Activated CD4-positive, alpha-beta T cell treated with anti-CD3 and anti-CD28 coated beads for 36 hours (primary cell): ENCODE measurements at regions of chr2 and their contacts with region 1.

Region 1: GRCh38 chr2:231557571-231558237 is 27.5 kb upstream of the NMUR1 start:
- DNase-seq: peak; percentile 73
- ATAC-seq: peak; percentile 98
- H3K4me3 Mint-ChIP-seq: no peak overlapping the region
- H3K27ac Mint-ChIP-seq: no peak overlapping the region
- H3K4me1 Mint-ChIP-seq: peaks cover 12% of the 10 kb centered on the region
- H3K27me3 Mint-ChIP-seq: peaks cover 3% of the 10 kb centered on the region

Region 2: DNA sequence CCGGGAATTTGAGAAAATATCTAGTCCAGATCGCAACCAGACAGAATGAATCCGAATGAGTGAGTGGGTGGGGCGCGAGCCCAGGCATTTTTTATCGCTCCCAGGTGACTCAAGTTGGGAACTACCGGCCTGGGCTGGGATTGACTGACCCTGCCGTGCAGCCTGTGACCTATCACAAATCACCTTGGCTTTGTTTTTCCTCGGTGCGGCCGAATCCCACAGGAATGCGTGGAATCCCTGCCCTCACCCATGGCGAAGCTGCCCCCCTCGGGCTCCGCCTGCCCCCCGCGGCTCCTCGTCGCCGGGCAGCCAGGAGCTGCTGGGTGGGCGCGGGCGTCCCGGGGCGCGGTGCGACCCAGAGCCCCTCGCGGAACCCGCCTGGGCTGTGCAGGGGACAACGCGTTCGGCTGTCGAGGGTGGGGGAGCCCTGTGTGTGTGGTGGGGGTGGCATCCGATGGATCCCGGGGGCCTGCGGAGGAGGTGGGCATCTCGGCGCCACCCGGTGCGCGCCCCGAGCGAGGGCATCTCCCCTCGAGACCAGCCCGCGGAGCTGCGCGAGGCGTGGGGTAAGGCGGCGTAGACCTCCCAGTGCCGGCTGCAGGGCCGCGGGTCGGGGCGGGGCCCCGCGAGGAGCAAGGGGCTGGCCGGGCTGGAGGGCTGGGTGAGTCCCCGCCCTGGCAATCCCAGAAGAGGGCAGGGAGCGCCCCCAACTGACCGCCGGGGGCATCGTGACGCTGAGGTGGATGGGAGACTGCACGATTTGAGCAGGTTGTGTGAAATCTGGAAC is 145.7 kb before region 1 on chr2:
- CTCF ChIA-PET with region 1: no interaction called
- POLR2A ChIA-PET with region 1: no interaction called
- intact Hi-C with region 1: no loop called
- DNase-seq: peak; percentile 86
- ATAC-seq: peak; percentile 99
- H3K4me3 Mint-ChIP-seq: peak overlapping the region; percentile 25
- H3K27ac Mint-ChIP-seq: no peak overlapping the region
- H3K4me1 Mint-ChIP-seq: peaks cover 6% of the 10 kb centered on the region
- H3K27me3 Mint-ChIP-seq: peaks cover 30% of the 10 kb centered on the region

Region 3: GRCh38 chr2:231482806-231483391 is 74.8 kb before region 1 on chr2:
- CTCF ChIA-PET with region 1: interaction called, 13 read pairs
- POLR2A ChIA-PET with region 1: no interaction called
- intact Hi-C with region 1: loop called (anchors 1 kb)
- DNase-seq: peak; percentile 85
- ATAC-seq: peak; percentile 83
- H3K4me3 Mint-ChIP-seq: peak overlapping the region; percentile 79
- H3K27ac Mint-ChIP-seq: peak overlapping the region; percentile 87
- H3K4me1 Mint-ChIP-seq: peaks cover 7% of the 10 kb centered on the region
- H3K27me3 Mint-ChIP-seq: no peaks in the 10 kb centered on the region

Region 4: GRCh38 chr2:231530091-231531011 is 27.4 kb before region 1 on chr2 and contains the start of gene NMUR1:
- CTCF ChIA-PET with region 1: interaction called, 8 read pairs
- POLR2A ChIA-PET with region 1: no interaction called
- intact Hi-C with region 1: loop called (anchors 1 kb)
- DNase-seq: peak; percentile 85
- ATAC-seq: peak; percentile 98
- H3K4me3 Mint-ChIP-seq: no peak within 1 kb of the TSS
- H3K27ac Mint-ChIP-seq: no peak within 1 kb of the TSS
- H3K4me1 Mint-ChIP-seq: peaks cover 7% of the 10 kb centered on the region
- H3K27me3 Mint-ChIP-seq: peaks cover 24% of the 10 kb centered on the region
- total RNA-seq, gene NMUR1: not detected

Region 5: GRCh38 chr2:231545105-231545902 is 12.4 kb before region 1 on chr2:
- CTCF ChIA-PET with region 1: interaction called, 10 read pairs
- POLR2A ChIA-PET with region 1: no interaction called
- intact Hi-C with region 1: no loop called
- DNase-seq: peak; percentile 81
- ATAC-seq: peak; percentile 91
- H3K4me3 Mint-ChIP-seq: peak overlapping the region; percentile 61
- H3K27ac Mint-ChIP-seq: peak overlapping the region; percentile 91
- H3K4me1 Mint-ChIP-seq: peaks cover 18% of the 10 kb centered on the region
- H3K27me3 Mint-ChIP-seq: peaks cover 2% of the 10 kb centered on the region